CD4-positive, alpha-beta T cell (primary cell): ENCODE measurements at regions of chr9 and their contacts with region 1.

Region 1: DNA sequence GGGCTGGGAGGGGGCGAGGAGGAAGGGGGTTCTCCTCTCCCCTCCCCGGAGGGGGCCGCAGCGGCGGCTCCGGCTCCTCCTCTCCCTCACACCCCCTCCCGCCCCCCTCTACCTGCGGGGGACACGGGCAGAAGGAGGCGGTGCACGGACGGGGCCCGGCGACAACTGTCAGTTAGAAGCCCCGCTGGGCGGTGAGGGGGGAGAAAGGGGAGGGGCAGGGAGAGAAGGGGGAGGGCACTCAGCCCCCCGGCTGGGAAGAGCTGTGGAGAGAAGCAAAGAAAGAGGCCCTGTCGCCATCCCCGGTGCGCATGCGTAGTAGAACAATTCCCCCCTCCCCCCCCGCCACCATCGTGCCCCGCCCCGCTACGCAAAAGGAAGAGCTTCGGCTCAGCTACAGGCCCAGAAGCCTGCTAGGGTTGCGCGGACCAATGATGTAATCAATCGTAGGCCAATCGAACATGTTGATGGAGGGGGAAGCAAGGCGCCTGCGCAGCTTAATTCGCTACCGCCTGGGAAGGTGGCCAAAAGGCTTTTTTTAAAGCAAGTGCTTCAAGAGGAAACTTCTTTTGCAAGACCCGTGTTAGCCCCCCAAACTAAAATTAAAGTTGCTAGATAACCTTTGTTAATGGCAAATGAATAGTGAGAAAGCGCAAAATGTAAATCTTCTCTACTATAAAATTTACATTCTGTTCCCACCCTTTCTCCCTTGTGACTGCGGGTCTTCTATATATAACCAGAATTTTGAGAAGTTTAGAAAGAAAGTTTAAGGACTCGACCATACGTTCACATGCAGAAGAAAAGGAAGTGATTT is 7.0 kb downstream of the RANBP6 start:
- DNase-seq: peak; percentile 88 to 99 (median 92)
- ATAC-seq: peak; percentile 70
- H3K4me3 ChIP-seq: peak overlapping the region; percentile 87
- H3K4me3 Mint-ChIP-seq: peak overlapping the region; percentile 91
- H3K27ac ChIP-seq: peak overlapping the region; percentile 91 to 95
- H3K27ac Mint-ChIP-seq: peak overlapping the region; percentile 97
- H3K4me1 ChIP-seq: peaks cover 11% of the 10 kb centered on the region
- H3K4me1 Mint-ChIP-seq: peaks cover 70% of the 10 kb centered on the region
- H3K27me3 ChIP-seq: no peaks in the 10 kb centered on the region
- H3K27me3 Mint-ChIP-seq: no peaks in the 10 kb centered on the region
- CTCF ChIP-seq: no peak

Region 2: DNA sequence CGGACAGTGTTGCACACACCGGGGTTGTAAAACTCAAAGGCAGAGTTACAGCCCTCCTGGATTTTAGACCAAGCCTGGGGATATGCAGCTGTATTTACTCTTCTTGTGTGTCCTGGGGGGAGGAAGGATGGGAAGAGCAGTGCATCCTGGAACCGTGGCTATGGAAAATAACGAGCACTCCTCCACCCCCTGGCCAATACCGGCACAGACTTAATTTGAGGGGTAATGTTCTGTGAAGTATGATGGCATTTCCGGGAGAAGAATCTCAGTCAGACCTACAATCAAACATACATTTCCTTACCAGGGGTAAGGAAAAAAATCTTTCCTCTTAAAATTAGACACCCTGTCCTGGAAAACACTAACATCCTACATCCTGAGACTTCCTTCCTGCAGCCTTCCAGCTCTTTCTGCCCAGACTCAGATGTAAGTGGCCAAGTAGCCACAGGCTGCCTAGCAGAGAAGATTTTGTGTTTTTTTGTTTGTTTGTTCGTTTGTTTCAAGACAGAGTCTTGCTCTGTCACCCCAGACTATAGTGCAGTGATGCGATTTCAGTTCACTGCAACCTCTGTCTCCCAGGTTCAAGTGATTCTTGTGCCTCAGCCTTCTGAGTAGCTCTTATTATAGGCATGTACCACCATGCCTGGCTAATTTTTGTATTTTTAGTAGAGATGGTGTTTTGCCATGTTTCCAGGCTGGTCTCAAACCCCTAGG is 164.4 kb before region 1 on chr9:
- CTCF ChIA-PET with region 1: no interaction called
- POLR2A ChIA-PET with region 1: interaction called, 8 read pairs
- intact Hi-C with region 1: loop called in 1 of 2 experiments (anchors 5 kb)
- DNase-seq: peak in 2 of 14 experiments; percentile 13 to 28
- ATAC-seq: peak; percentile 11
- H3K4me3 ChIP-seq: peak overlapping the region; percentile 15
- H3K4me3 Mint-ChIP-seq: peak overlapping the region; percentile 59
- H3K27ac ChIP-seq: peak overlapping the region in 1 of 2 donors; percentile 54
- H3K27ac Mint-ChIP-seq: peak overlapping the region; percentile 77
- H3K4me1 ChIP-seq: peaks cover 58% of the 10 kb centered on the region
- H3K4me1 Mint-ChIP-seq: peaks cover 66% of the 10 kb centered on the region
- H3K27me3 ChIP-seq: no peaks in the 10 kb centered on the region
- H3K27me3 Mint-ChIP-seq: no peaks in the 10 kb centered on the region
- CTCF ChIP-seq: no peak

Region 3: GRCh38 chr9:5953743-5954707 is 54.3 kb before region 1 on chr9:
- CTCF ChIA-PET with region 1: no interaction called
- POLR2A ChIA-PET with region 1: interaction called, 4 read pairs
- intact Hi-C with region 1: loop called in 1 of 2 experiments (anchors 10 kb)
- DNase-seq: no peak
- ATAC-seq: no peak
- H3K4me3 ChIP-seq: no peak overlapping the region
- H3K4me3 Mint-ChIP-seq: no peak overlapping the region
- H3K27ac ChIP-seq: no peak overlapping the region
- H3K27ac Mint-ChIP-seq: no peak overlapping the region
- H3K4me1 ChIP-seq: no peaks in the 10 kb centered on the region
- H3K4me1 Mint-ChIP-seq: peaks cover 13% of the 10 kb centered on the region
- H3K27me3 ChIP-seq: no peaks in the 10 kb centered on the region
- H3K27me3 Mint-ChIP-seq: no peaks in the 10 kb centered on the region
- CTCF ChIP-seq: no peak

Region 4: DNA sequence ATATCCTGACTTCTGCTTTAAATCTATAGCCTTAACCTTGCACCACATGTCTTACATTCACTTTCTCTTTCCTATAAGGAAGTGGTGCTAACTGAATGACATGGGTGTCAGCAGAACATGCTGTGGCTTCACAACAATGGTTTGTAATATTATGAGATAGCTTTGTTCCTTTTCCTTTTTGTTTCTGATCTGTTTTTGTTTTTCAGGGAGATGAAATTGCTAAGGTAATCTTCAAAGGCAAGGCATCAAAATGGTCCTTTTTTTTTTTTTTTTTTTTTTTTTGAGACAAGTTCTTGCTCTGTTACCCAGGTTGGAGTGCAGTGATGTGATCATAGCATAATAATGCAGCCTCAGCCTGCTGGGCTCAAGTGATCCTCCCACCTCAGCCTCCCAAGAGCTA is 60.6 kb after region 1 on chr9:
- CTCF ChIA-PET with region 1: no interaction called
- POLR2A ChIA-PET with region 1: interaction called, 11 read pairs
- intact Hi-C with region 1: no loop called
- DNase-seq: peak in 3 of 14 experiments; percentile 71 to 86 (median 72)
- ATAC-seq: peak; percentile 97
- H3K4me3 ChIP-seq: peak overlapping the region; percentile 19
- H3K4me3 Mint-ChIP-seq: peak overlapping the region; percentile 9
- H3K27ac ChIP-seq: peak overlapping the region in 1 of 2 donors; percentile 61
- H3K27ac Mint-ChIP-seq: peak overlapping the region; percentile 67
- H3K4me1 ChIP-seq: peaks cover 16% of the 10 kb centered on the region
- H3K4me1 Mint-ChIP-seq: peaks cover 19% of the 10 kb centered on the region
- H3K27me3 ChIP-seq: no peaks in the 10 kb centered on the region
- H3K27me3 Mint-ChIP-seq: no peaks in the 10 kb centered on the region
- CTCF ChIP-seq: no peak